Activated T-helper 1 cell treated with anti-CD3 and anti-CD28 coated beads, Interleukin-12 subunit alpha, Interleukin-12 subunit beta, Interleukin-2, Interleukin-4 antibody, amounts not matched to agents 30 ng/mL and 10 ng/mL and 1 ng/mL, durations not matched to agents 14 hours and 24 hours and 36 hours (primary cell): ENCODE measurements at regions of chr10 and their contacts with region 1.

Region 1: GRCh38 chr10:96695366-96695765 is 24.9 kb downstream of the PIK3AP1 start:
- DNase-seq: no peak
- H3K4me3 Mint-ChIP-seq: peak overlapping the region; percentile 35
- H3K27ac Mint-ChIP-seq: peak overlapping the region; percentile 61
- H3K4me1 Mint-ChIP-seq: peaks cover 37% of the 10 kb centered on the region
- H3K27me3 Mint-ChIP-seq: no peaks in the 10 kb centered on the region

Region 2: GRCh38 chr10:96651998-96652431 is 43.4 kb before region 1 on chr10:
- intact Hi-C with region 1: loop called (anchors 1 kb)
- DNase-seq: no peak
- H3K4me3 Mint-ChIP-seq: peak overlapping the region; percentile 49
- H3K27ac Mint-ChIP-seq: peak overlapping the region; percentile 86
- H3K4me1 Mint-ChIP-seq: peaks cover 41% of the 10 kb centered on the region
- H3K27me3 Mint-ChIP-seq: no peaks in the 10 kb centered on the region

Region 3: DNA sequence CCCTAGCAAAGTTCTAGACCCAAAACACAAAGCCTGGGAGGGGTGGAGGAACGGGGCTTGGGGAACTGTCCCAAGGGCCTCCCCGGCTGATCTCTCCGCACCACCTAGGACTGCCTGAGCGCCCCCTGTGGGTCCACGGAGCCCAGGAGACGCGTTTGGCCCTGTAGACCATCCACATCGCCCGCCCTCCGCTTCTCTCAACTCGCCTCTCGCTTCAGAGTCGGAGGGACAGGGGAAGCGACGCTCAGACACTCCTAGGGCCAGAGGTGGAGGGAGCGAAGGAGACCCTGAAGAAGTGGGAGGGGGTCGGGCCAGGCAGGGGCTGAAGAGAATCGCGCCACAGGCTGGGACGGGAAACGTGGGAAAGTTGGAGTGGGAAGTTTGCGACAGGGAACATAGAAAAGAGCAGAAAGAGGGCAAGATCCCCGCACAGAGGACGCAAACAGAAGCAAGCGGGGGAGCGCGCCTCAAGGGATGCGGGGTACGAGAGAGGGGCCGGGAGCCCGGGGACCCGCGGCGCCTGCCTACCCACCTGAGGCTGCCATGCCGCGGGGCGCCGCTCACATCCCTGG is 24.6 kb after region 1 on chr10:
- intact Hi-C with region 1: loop called (anchors 1 kb)
- DNase-seq: peak; percentile 14
- H3K4me3 Mint-ChIP-seq: peak overlapping the region; percentile 95
- H3K27ac Mint-ChIP-seq: peak overlapping the region; percentile 88
- H3K4me1 Mint-ChIP-seq: peaks cover 27% of the 10 kb centered on the region
- H3K27me3 Mint-ChIP-seq: peaks cover 9% of the 10 kb centered on the region